PC-3 (cell line): ENCODE measurements at regions of chr12 and their contacts with region 1.

Region 1: DNA sequence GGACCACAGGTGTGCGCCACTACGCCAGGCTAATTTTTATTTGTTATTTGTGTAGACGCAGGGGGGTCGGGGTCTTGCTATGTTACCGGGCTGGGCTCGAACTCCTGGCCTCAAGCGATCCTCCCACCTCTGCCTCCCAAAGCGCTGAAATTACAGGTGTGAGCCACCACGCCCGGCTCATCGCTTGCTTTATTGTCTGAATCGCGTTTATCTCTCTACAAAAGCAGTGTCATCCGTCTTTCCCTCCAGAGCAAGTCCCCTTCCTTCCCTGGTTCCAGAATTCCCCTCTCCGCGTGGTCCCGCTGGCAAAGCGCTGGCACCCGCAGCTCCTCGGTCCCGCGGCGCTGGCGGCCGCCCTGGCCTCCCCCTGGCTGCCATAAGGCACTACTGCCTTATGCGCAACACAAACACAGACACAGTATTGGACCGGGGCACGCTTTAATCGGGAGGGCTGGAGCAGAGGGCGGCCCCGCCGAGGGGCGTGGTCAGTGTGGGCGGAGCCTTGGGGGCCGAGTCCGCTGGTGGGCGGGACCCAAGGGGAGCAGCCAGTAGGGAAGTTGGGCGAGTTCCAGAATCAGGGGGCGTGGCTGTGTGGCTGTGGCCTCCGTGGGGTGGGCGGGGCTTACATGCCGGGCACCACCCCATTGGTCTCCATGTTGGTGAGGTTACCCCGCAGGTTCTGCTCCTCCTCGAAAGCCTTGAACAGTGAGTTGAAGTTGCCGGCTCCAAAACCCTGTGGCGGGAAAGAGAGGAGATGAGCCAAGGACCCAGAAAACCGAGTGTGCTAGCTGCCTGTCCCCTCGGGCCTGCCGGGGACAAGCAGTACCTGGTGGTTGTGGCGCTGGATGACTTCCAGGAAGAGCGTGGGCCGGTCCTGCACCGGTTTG is 19.3 kb downstream of the HPD start:
- DNase-seq: peak; percentile 100
- ATAC-seq: peak; percentile 96
- H3K4me3 ChIP-seq: peak overlapping the region; percentile 79
- H3K27ac ChIP-seq: peak overlapping the region; percentile 12; the same call in 1 of the 2 replicates
- H3K4me1 ChIP-seq: 0 out of 2 replicates have a peak, but pooled peaks cover 4% of the 10 kb centered on the region
- H3K27me3 ChIP-seq: no peaks in the 10 kb centered on the region
- CTCF ChIP-seq: no peak; the same call in 1 of the 2 replicates

Region 2: DNA sequence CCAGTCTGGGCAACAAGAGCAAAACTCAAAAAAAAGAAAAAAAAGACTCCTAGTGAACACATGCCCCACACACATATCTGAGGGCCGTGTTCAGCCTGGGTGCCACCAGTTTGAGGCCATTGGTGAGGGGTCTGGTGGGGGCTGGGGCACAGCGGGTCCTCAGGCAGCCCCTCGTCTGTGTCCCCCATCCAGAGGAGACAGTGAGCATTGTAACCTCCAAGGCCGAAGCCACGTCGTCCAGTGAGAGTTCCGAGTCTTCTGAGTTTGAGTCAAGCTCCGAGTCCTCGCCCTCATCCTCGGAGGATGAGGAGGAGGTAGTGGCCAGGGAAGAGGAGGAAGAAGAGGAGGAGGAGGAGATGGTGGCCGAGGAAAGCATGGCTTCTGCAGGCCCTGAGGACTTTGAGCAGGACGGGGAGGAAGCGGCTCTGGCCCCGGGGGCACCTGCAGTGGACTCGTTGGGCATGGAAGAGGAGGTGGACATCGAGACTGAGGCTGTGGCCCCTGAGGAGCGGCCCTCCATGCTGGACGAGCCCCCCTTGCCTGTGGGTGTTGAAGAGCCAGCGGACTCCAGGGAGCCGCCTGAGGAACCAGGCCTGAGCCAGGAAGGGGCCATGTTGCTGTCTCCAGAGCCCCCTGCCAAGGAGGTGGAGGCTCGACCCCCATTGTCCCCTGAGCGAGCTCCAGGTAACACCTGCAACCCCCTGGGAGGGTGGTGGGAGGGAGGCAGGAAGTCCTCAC is 20.0 kb before region 1 on chr12:
- CTCF ChIA-PET with region 1: no interaction called
- POLR2A ChIA-PET with region 1: no interaction called
- intact Hi-C with region 1: no loop called
- DNase-seq: no peak
- ATAC-seq: no peak
- H3K4me3 ChIP-seq: no peak overlapping the region
- H3K27ac ChIP-seq: no peak overlapping the region
- H3K4me1 ChIP-seq: no peaks in the 10 kb centered on the region
- H3K27me3 ChIP-seq: no peaks in the 10 kb centered on the region
- CTCF ChIP-seq: no peak

Region 3: DNA sequence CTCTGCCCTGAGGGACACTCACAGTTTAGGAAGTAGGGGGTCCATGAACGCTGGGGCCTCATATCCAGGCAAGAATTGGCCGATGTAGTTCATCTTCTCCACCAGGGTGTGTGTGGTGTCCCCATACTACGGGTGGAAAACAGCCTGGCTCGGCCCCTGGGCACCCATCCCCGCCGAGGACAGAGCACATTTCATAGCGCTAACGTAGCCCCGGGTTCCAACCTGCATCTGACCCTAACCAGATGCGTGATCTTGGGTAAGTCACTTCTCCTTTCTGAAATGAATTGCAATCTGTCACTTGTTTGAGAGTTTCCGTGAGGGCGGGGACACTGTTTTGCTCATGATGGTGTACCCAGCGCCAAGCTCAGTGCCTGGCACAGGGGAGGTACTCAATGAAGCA is 10.3 kb after region 1 on chr12:
- CTCF ChIA-PET with region 1: interaction called, 11 read pairs
- POLR2A ChIA-PET with region 1: no interaction called
- intact Hi-C with region 1: no loop called
- DNase-seq: no peak
- ATAC-seq: no peak
- H3K4me3 ChIP-seq: no peak overlapping the region
- H3K27ac ChIP-seq: no peak overlapping the region
- H3K4me1 ChIP-seq: no peaks in the 10 kb centered on the region
- H3K27me3 ChIP-seq: no peaks in the 10 kb centered on the region
- CTCF ChIP-seq: 0 out of 2 replicates have a peak, but pooled peaks have one; percentile 10

Region 4: GRCh38 chr12:122225683-122226407 is 386.5 kb after region 1 on chr12 and contains the start of gene DIABLO:
- CTCF ChIA-PET with region 1: no interaction called
- POLR2A ChIA-PET with region 1: interaction called, 11 read pairs
- intact Hi-C with region 1: no loop called
- DNase-seq: peak; percentile 99
- ATAC-seq: peak; percentile 93
- H3K4me3 ChIP-seq: peak within 1 kb of the TSS; percentile 96
- H3K27ac ChIP-seq: peak within 1 kb of the TSS; percentile 82
- H3K4me1 ChIP-seq: peaks cover 18% of the 10 kb centered on the region
- H3K27me3 ChIP-seq: no peaks in the 10 kb centered on the region
- CTCF ChIP-seq: no peak
- total RNA-seq, gene DIABLO: 97.6 and 112 TPM in 2 replicates